Sciatic nerve (tissue), 2 donors: ENCODE measurements at regions of chr4 and their contacts with region 1.

Region 1: DNA sequence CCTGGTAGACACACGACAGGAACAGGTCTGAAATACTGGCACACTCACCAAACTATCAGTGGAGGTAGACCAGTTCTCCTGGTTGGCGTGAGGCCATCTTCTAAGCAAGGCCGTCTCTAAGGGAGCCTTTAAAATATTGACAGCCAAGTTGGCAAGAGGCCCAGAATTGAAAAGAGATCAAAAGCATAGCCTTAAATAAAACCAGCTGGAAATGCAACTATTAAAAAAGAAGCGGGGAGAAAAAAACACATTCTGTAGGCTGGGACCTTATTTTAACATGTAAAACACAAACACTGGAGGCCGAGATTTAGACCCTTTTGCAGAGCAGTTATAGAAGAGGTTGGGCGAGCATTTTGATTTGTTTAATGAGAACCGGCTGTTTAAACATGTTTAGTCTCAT is 233.0 kb upstream of the CLNK start:
- DNase-seq: no peak
- ATAC-seq: peak; percentile 38

Region 2: GRCh38 chr4:10123227-10124101 is 794.1 kb before region 1 on chr4:
- intact Hi-C with region 1: no loop called
- DNase-seq: no peak
- ATAC-seq: peak; percentile 38

Region 3: DNA sequence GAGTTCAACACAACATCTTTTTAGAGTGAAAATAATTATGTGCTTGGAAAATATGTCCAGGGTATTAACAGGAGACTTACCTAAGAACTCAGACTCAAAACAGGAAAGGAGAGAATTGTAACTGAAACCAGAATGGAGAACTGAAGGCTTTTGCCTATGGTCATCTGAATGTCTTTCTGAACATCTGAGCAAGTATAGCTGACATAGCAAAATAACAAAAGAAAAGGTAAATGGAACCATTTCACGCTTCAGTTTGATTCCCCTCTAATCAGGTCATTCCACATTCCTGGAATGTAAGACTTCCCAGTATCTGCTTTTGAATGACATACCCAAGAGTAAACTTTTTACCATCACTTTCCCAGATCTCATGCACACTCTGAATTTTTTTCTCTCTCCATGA is 1011.5 kb after region 1 on chr4:
- intact Hi-C with region 1: loop called (anchors 10 kb)
- DNase-seq: no peak
- ATAC-seq: no peak